PC-3 (cell line): ENCODE measurements at regions of chr19 and their contacts with region 1.

Region 1: DNA sequence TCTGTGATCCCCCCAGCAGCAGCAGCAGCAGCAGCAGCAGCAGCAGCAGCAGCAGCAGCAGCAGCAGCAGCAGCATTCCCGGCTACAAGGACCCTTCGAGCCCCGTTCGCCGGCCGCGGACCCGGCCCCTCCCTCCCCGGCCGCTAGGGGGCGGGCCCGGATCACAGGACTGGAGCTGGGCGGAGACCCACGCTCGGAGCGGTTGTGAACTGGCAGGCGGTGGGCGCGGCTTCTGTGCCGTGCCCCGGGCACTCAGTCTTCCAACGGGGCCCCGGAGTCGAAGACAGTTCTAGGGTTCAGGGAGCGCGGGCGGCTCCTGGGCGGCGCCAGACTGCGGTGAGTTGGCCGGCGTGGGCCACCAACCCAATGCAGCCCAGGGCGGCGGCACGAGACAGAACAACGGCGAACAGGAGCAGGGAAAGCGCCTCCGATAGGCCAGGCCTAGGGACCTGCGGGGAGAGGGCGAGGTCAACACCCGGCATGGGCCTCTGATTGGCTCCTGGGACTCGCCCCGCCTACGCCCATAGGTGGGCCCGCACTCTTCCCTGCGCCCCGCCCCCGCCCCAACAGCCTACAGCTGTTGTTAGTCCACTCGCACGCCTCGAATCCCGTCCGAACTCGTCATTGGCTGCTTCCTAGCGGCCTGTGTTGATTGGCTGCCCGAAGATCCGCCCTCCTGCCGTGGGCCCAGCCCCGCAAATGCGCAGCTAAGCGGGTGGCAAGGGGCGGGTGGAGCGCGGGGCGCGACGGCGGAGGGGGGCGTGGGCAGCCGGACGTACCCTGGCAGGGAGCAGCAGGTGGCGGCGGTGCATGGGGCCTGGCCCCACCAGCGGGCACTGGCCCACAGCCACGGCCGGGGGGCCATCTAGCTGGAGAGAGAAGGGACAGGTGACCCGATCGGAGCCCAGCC is 1.4 kb upstream of the SIX5 start:
- DNase-seq: peak; percentile 93
- ATAC-seq: peak; percentile 60
- H3K4me3 ChIP-seq: peak overlapping the region; percentile 72
- H3K27ac ChIP-seq: peak overlapping the region; percentile 37; the same call in 1 of the 2 replicates
- H3K4me1 ChIP-seq: peaks cover 29% of the 10 kb centered on the region; the same call in 1 of the 2 replicates
- H3K27me3 ChIP-seq: no peaks in the 10 kb centered on the region
- CTCF ChIP-seq: peak; percentile 78

Region 2: GRCh38 chr19:45677351-45678230 is 92.9 kb before region 1 on chr19:
- CTCF ChIA-PET with region 1: no interaction called
- POLR2A ChIA-PET with region 1: interaction called, 13 read pairs
- intact Hi-C with region 1: no loop called
- DNase-seq: peak; percentile 92
- ATAC-seq: peak; percentile 78
- H3K4me3 ChIP-seq: peak overlapping the region; percentile 68
- H3K27ac ChIP-seq: no peak overlapping the region
- H3K4me1 ChIP-seq: peaks cover 7% of the 10 kb centered on the region; the same call in 1 of the 2 replicates
- H3K27me3 ChIP-seq: no peaks in the 10 kb centered on the region
- CTCF ChIP-seq: no peak

Region 3: DNA sequence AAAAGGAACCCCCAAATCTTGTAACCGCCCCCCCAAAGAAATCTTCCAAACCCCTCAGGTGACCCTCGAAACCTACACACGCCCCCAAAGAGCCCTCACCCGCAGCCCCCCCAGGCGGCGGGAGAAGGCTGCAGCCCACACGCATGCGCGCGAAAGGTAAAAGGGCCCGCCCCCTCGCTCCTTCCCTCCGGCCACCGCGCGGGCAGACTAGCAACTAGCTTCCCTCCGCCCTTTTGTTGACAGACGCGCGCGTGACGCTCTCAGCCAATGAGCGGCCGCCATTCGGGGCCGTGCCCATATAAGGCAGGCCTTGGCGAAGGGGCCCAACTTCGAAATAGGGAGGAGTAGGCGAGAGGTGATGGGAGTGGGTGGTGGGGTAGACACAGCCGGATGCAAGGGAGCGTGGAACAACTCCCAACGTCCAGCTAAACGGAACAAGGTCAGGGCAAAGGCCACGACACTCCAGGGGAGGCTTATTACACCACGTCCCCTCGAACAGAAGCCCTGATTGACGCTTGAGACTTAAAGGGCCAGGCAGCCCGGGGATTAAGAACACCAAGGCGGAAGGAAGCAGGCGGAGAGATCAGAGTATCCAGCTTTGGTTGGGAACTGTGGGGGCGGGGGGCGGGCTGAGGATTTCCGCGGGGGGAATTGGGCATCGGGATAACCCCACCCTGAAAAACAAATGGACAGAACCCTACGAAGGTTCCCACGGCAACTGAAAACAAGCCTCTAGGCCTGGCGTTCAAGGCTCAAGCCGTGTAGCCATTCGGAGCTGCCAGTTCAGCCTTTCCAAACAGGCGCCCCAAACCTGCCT is 53.1 kb before region 1 on chr19:
- CTCF ChIA-PET with region 1: interaction called, 10 read pairs
- POLR2A ChIA-PET with region 1: interaction called, 21 read pairs
- intact Hi-C with region 1: loop called (anchors 1 kb)
- DNase-seq: peak; percentile 97
- ATAC-seq: peak; percentile 88
- H3K4me3 ChIP-seq: peak overlapping the region; percentile 87
- H3K27ac ChIP-seq: peak overlapping the region; percentile 70
- H3K4me1 ChIP-seq: peaks cover 19% of the 10 kb centered on the region
- H3K27me3 ChIP-seq: no peaks in the 10 kb centered on the region
- CTCF ChIP-seq: no peak

Region 4: GRCh38 chr19:45792470-45793177 is 22.2 kb after region 1 on chr19 and contains the start of gene DMWD:
- CTCF ChIA-PET with region 1: interaction called, 7 read pairs
- POLR2A ChIA-PET with region 1: interaction called, 10 read pairs
- intact Hi-C with region 1: no loop called
- DNase-seq: peak; percentile 96
- ATAC-seq: peak; percentile 97
- H3K4me3 ChIP-seq: peak within 1 kb of the TSS; percentile 93
- H3K27ac ChIP-seq: no peak within 1 kb of the TSS
- H3K4me1 ChIP-seq: peaks cover 6% of the 10 kb centered on the region; the same call in 1 of the 2 replicates
- H3K27me3 ChIP-seq: no peaks in the 10 kb centered on the region
- CTCF ChIP-seq: no peak
- total RNA-seq, gene DMWD: 34.9 and 50.3 TPM in 2 replicates

Region 5: GRCh38 chr19:45817010-45817724 is 46.7 kb after region 1 on chr19:
- CTCF ChIA-PET with region 1: interaction called, 13 read pairs
- POLR2A ChIA-PET with region 1: no interaction called
- intact Hi-C with region 1: no loop called
- DNase-seq: peak; percentile 91
- ATAC-seq: peak; percentile 90
- H3K4me3 ChIP-seq: no peak overlapping the region
- H3K27ac ChIP-seq: no peak overlapping the region
- H3K4me1 ChIP-seq: no peaks in the 10 kb centered on the region; the same call in 1 of the 2 replicates
- H3K27me3 ChIP-seq: no peaks in the 10 kb centered on the region
- CTCF ChIP-seq: peak; percentile 92